Vagina (tissue), 2 donors: ENCODE measurements at regions of chr17 and their contacts with region 1.

Region 1: GRCh38 chr17:76529224-76530094 is 8.1 kb downstream of the CYGB start:
- DNase-seq: peak in 1 of 2 donors; percentile 98
- H3K4me3 ChIP-seq: peak overlapping the region; percentile 1 to 28
- H3K27ac ChIP-seq: peak overlapping the region; percentile 96
- H3K4me1 ChIP-seq: peaks cover 78% of the 10 kb centered on the region
- H3K27me3 ChIP-seq: no peaks in the 10 kb centered on the region
- CTCF ChIP-seq: no peak
- POLR2A ChIP-seq: no peak

Region 2: DNA sequence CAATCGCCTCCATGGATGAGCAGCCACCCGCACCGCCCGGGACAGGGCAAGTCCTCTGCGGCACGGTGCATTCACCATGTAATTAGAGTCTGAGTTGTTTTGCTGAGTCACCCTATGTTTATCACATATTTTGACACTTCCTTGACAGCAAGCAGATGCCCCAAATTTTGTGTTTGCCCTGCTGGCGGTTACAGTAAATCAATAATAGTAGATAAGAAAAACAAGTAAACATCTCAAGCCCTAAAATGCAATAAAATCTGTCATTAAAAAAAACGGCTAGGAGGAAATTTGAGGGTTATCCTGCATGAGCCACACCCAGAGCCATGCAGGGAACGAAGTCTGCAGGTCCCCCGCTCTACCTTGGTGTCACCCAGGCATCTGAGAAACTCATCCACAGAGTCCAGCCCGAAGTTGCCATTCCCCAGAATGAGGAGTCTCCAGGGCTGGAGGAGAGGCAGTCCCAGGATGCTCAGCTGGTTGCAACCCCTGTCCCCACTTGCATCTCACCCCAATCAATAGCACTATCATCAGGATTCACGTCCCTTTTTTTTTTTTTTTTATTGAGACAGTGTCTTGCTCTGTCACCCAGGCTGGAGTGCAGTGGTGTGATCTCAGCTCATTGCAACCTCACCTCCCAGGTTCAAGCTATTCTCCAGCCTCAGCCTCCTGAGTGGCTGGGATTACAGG is 130.6 kb after region 1 on chr17:
- intact Hi-C with region 1: no loop called
- DNase-seq: no peak
- H3K4me3 ChIP-seq: no peak overlapping the region
- H3K27ac ChIP-seq: no peak overlapping the region
- H3K4me1 ChIP-seq: peaks cover 15% of the 10 kb centered on the region
- H3K27me3 ChIP-seq: no peaks in the 10 kb centered on the region
- CTCF ChIP-seq: no peak
- POLR2A ChIP-seq: no peak

Region 3: GRCh38 chr17:76714822-76715495 is 185.5 kb after region 1 on chr17:
- intact Hi-C with region 1: loop called (anchors 10 kb)
- DNase-seq: no peak
- H3K4me3 ChIP-seq: no peak overlapping the region
- H3K27ac ChIP-seq: peak overlapping the region; percentile 14
- H3K4me1 ChIP-seq: peaks cover 25% of the 10 kb centered on the region
- H3K27me3 ChIP-seq: no peaks in the 10 kb centered on the region
- CTCF ChIP-seq: peak; percentile 59 to 85 (median 78)
- POLR2A ChIP-seq: no peak